GM10248 (cell line): ENCODE measurements at regions of chr3 and their contacts with region 1.

Region 1: DNA sequence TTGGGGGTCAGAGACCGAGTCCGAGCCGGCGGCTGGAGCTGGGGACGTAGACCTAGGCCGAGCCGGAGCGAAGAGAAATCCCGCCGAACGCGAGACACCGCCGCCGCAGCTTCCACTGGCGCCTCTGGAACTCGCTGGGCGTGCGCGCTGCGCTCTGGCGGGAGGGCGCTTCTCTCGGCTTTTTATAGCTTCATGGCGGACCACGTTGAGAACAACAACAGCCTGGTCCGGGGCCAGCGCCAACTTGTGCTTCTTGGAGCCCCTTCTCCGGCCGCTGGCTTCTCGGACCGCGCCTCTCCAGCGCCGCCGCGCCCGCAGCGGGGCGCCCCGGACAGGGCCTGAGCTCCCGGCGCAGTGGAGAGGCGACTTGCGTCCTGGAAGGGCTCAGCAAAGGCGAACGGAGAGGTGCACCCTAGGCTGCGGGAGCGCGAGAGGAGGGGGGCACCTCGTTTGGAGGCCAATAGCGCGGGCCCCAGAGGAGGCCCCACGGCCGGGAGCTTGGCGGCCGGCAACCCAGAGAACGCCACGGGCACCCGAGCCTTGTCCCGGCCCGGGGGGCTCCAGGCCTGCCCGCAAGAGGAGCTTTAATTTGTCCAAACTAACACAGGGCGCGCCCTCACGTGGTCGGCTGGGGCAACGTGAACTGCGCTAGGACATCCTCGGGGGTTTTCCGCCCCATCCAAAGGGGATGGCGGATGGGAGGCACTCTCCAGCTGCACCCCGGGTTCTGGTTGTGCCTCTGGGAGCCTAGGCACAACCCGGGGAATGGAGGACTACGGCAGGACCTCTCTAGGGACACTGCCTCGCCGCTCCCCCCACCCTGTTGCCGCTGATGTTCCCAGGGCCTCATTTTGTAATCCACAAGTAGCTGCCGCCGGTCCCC is 37.7 kb downstream of the HMCES start:
- DNase-seq: peak; percentile 83
- CTCF ChIP-seq: peak; percentile 79

Region 2: GRCh38 chr3:129278439-129278970 is 37.9 kb before region 1 on chr3 and contains the start of gene HMCES:
- CTCF ChIA-PET with region 1: interaction called, 28 read pairs
- POLR2A ChIA-PET with region 1: interaction called, 13 read pairs
- DNase-seq: peak; percentile 92
- CTCF ChIP-seq: no peak

Region 3: DNA sequence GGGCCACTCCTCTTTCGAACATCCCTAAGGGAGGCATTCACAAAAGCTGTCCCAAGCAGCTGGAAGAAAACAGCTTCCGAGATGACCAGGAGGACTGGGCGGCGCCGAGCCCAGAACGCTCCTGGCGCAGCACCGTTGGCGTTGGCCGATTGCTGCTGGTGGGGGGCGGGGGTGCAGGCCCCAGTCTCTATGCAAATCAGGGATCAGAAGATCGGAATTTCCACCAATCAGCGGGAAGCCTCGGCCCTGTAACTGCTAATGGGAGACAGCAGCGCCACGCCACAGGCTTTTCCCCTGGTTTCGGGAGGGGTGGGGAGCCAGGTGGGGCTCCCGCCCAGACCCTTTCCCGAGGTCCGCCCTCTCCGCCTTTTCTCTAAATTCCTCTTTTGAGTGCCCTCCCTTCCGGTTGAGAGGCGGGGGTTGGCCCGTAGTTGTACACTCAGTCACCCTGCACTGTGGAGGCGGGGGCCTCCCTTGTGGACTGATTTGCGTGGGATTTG is 10.7 kb before region 1 on chr3:
- CTCF ChIA-PET with region 1: interaction called, 22 read pairs
- POLR2A ChIA-PET with region 1: interaction called, 13 read pairs
- DNase-seq: peak; percentile 67
- CTCF ChIP-seq: no peak

Region 4: DNA sequence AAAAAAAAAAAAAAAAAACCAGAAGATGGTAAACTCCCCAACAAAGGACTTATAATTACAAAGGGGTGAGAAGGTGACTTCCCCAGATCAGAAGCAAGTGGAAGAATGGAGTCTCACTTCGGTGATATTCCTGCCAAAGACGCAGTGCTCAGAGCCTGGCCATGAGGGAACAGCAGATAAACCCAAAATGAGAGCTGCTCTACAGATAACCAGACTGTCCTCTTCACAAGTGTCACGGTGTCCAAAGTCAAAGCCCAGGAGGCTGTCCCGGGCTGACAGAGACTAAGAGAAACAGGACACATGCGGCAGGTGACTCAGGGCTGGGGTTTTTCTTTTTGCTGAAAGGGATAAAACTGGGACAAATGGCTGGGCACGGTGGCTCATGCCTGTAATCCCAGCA is 11.1 kb after region 1 on chr3:
- CTCF ChIA-PET with region 1: interaction called, 16 read pairs
- POLR2A ChIA-PET with region 1: interaction called, 4 read pairs
- DNase-seq: no peak
- CTCF ChIP-seq: no peak

Region 5: DNA sequence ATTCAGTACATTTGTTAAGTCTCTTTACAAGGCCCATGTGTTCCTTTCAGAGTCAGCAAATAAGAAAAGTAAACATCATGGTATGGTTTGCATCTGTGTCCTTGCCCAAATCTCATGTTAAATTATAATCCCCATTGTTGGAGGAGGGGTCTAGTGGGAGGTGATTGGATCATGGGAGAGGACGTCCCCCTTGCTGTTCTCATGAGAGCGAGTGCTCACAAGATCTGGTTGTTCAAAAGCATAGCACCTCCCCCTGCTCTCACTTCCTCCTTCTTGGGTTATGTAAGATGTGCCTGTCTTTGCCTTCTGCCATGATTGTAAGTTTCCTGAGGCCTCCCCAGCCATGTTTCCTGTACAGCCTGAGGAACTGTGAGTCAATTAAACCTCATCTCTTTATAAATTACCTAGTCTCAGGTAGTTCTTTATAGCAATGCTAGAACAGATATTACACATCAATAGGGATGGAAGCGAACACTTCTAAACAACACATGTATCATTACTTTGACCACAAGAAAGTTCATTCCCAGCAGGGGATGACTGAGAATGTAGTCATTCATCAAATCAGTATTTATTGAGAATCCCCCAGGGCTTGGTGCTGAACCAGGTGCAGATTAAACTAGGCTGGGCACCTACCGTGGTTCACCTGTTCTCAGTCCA is 107.9 kb after region 1 on chr3:
- CTCF ChIA-PET with region 1: no interaction called
- POLR2A ChIA-PET with region 1: no interaction called
- DNase-seq: no peak
- CTCF ChIP-seq: no peak

Region 6: GRCh38 chr3:129507181-129507831 is 190.9 kb after region 1 on chr3:
- CTCF ChIA-PET with region 1: no interaction called
- POLR2A ChIA-PET with region 1: no interaction called
- DNase-seq: no peak
- CTCF ChIP-seq: no peak